Cardiac septum (tissue), 1 donor: ENCODE measurements at regions of chr3 and their contacts with region 1.

Region 1: GRCh38 chr3:71652781-71653413 is 69.4 kb upstream of the FOXP1 start:
- DNase-seq: no peak

Region 2: GRCh38 chr3:70064194-70064779 is 1588.6 kb before region 1 on chr3:
- intact Hi-C with region 1: loop called (anchors 10 kb)
- DNase-seq: no peak

Region 3: DNA sequence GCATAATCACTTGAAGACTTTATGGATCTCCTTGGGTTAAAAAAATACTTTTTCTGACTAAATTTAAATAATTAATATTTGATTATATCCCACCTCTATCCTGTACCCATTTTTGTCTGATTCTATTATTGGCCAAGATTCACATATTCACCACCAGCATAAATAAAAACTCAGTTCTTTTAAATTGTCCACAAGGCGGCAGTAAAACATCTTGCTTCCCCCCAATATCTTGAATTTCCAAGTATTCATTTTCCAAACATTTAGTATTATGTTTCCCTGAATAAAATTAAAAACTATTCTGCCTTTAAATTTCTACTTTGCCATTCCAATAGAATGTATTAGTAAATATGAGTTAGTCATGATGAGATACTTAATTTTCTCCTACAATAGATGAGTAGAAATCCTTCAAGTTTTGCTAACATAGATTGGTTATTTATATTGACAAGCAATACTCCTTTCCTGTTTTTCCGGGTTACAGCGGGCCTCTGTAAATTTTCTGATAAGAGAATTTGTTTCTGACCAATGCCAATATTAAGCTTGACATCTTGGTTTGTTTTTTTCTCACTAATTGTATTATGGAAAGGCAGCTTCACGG is 1121.7 kb before region 1 on chr3:
- intact Hi-C with region 1: loop called (anchors 5 kb)
- DNase-seq: no peak

Region 4: DNA sequence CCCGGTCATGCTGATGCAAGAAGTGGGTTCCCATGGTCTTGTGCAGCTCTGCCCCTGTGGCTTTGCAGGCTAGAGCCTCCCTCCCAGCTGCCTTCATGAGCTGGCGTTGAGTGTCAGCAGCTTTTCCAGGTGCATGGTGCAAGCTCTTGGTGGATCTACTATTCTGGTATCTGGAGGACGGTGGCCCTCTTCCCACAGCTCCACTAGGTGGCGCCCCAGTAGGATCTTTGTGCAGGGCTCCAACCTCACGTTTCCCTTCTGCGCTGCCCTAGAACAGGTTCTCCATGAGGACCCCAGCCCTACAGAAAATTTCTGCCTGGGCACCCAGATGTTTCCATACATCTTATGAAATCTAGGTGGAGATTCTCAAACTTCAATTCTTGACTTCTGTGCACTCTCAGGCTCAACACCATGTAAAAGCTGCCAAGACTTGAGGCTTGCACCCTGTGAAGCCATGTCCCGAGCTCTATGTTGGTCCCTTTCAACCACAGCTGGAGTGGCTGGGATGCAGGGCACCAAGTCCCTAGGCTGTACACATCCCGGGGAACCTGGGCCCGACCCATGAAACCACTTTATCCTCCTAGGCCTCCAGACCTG is 1102.1 kb before region 1 on chr3:
- intact Hi-C with region 1: loop called (anchors 5 kb)
- DNase-seq: no peak

Region 5: GRCh38 chr3:71478568-71478967 is 174.3 kb before region 1 on chr3:
- intact Hi-C with region 1: no loop called
- DNase-seq: no peak